Upper lobe of right lung (tissue), 1 donor: ENCODE measurements at regions of chr17 and their contacts with region 1.

Region 1: DNA sequence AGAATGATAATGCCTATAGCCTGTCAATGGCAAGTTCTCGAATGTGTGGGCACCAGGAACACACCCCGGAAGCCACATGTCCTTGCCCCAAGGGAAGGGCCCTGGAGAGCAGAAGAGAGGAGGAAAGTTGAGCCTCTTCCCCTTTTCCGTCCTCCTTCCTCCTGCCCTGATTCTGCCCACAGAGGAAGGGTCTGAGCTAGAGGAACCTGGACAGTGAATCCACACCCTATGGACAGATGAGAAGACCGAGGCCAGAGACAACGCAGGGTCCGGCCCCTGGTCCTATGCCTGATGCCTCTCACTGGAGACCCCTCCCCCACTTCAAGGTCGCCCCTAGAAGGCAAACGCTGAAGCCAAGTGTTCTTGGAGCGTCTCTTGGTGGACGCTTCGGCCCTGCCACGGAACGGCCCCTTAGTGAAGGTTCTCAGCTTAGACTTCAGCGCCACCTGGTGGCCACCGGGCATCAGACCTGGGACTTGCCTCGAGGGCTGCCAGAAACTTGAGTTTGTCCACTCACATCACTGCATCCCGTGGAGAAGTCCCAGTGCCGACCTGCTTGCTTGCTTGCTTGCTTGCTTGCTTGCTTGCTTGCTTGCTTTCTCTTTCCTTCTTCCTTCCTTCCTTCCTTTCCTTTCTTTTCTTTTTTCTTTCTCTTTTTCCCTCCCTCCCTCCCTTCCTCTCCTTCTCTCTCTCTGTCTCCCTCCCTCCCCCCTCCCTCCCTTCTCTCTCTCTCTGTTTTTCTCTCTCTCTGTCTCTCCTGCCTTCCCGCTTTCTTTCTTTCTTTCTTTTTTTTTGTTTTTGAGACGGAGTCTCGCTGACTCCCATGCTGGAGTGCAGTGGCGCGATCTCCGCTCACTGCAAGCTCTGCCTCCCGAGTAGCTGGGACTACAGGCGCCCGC is 20.6 kb upstream of the SPNS3 start:
- DNase-seq: peak; percentile 95
- ATAC-seq: peak; percentile 98
- H3K4me3 ChIP-seq: no peak overlapping the region
- H3K27ac ChIP-seq: no peak overlapping the region
- H3K4me1 ChIP-seq: no peaks in the 10 kb centered on the region
- H3K27me3 ChIP-seq: no peaks in the 10 kb centered on the region
- CTCF ChIP-seq: peak; percentile 88

Region 2: DNA sequence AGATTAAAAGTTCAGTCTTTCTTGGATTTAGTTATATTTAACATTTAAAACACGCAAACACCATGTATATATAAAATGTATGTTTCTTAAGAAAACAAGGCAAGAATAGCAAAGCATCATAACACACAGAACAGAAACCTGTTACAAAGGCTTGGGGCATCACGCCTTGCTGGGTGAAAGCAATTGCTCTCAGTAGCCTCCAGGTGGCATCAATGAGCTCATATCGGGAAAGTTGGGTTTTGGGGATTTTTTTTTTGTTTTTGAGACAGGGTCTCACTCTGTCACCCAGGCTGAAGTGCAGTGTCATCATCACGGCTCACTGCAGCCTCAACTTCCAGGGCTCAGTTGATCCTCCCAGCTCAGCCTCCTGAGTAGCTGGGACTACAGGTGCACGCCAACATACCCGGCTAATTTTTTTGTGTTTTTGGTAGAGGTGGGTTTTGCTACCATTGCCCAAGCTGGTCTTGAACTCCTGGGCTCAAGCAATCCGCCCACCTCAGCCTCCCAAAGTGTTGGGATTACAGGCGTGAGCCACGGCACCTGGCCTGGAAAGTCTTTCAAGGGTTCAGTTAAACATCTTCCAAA is 213.3 kb before region 1 on chr17:
- intact Hi-C with region 1: loop called (anchors 2 kb)
- DNase-seq: no peak
- ATAC-seq: peak; percentile 63
- H3K4me3 ChIP-seq: no peak overlapping the region
- H3K27ac ChIP-seq: no peak overlapping the region
- H3K4me1 ChIP-seq: no peaks in the 10 kb centered on the region
- H3K27me3 ChIP-seq: no peaks in the 10 kb centered on the region
- CTCF ChIP-seq: peak; percentile 69

Region 3: DNA sequence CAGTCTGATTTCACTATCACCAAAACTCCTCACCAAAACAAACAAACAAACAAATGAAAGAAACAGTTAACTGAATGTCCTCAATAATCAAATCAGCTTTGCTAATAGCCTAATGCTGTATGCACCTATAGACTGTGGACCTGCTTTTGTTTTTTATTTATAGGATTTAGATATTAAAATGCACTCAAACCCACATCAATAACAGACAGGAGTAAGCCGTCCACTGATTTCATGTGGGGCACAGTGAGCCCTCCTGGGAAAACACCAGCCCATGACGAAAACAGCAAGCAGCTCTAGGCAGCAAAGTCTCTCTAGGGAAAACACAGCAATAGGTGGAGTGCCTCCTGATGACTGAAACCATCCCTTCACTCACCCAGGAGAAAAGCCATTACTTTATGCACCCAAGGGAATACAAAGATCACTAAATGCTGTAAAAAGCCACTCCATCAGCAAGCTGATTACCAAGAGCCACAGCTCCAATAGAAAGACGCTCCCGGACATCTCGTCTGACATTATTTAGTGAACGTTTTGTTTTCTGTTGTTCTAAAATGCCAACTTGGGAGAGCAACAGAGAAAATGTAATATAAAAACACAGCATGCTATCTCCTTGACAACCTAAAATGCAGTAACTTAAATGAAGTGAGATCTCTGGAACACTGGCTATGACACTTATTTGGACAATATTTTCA is 197.2 kb before region 1 on chr17:
- intact Hi-C with region 1: loop called (anchors 5 kb)
- DNase-seq: no peak
- ATAC-seq: no peak
- H3K4me3 ChIP-seq: no peak overlapping the region
- H3K27ac ChIP-seq: no peak overlapping the region
- H3K4me1 ChIP-seq: no peaks in the 10 kb centered on the region
- H3K27me3 ChIP-seq: no peaks in the 10 kb centered on the region
- CTCF ChIP-seq: no peak

Region 4: GRCh38 chr17:4345581-4346252 is 67.5 kb before region 1 on chr17:
- intact Hi-C with region 1: no loop called
- DNase-seq: no peak
- ATAC-seq: no peak
- H3K4me3 ChIP-seq: no peak overlapping the region
- H3K27ac ChIP-seq: no peak overlapping the region
- H3K4me1 ChIP-seq: peaks cover 14% of the 10 kb centered on the region
- H3K27me3 ChIP-seq: no peaks in the 10 kb centered on the region
- CTCF ChIP-seq: no peak

Region 5: GRCh38 chr17:4366327-4367063 is 46.7 kb before region 1 on chr17 and contains the start of gene UBE2G1:
- intact Hi-C with region 1: no loop called
- DNase-seq: peak; percentile 99
- ATAC-seq: peak; percentile 97
- H3K4me3 ChIP-seq: peak within 1 kb of the TSS; percentile 99
- H3K27ac ChIP-seq: peak within 1 kb of the TSS; percentile 95
- H3K4me1 ChIP-seq: peaks cover 21% of the 10 kb centered on the region
- H3K27me3 ChIP-seq: no peaks in the 10 kb centered on the region
- CTCF ChIP-seq: no peak
- total RNA-seq, gene UBE2G1: 38.4 TPM

Region 6: GRCh38 chr17:4607773-4608187 is 194.6 kb after region 1 on chr17:
- intact Hi-C with region 1: no loop called
- DNase-seq: no peak
- ATAC-seq: peak; percentile 55
- H3K4me3 ChIP-seq: no peak overlapping the region
- H3K27ac ChIP-seq: peak overlapping the region; percentile 34
- H3K4me1 ChIP-seq: peaks cover 26% of the 10 kb centered on the region
- H3K27me3 ChIP-seq: no peaks in the 10 kb centered on the region
- CTCF ChIP-seq: no peak